ENCODE measurements at regions of chr20 and their contacts with region 1.

Region 1: DNA sequence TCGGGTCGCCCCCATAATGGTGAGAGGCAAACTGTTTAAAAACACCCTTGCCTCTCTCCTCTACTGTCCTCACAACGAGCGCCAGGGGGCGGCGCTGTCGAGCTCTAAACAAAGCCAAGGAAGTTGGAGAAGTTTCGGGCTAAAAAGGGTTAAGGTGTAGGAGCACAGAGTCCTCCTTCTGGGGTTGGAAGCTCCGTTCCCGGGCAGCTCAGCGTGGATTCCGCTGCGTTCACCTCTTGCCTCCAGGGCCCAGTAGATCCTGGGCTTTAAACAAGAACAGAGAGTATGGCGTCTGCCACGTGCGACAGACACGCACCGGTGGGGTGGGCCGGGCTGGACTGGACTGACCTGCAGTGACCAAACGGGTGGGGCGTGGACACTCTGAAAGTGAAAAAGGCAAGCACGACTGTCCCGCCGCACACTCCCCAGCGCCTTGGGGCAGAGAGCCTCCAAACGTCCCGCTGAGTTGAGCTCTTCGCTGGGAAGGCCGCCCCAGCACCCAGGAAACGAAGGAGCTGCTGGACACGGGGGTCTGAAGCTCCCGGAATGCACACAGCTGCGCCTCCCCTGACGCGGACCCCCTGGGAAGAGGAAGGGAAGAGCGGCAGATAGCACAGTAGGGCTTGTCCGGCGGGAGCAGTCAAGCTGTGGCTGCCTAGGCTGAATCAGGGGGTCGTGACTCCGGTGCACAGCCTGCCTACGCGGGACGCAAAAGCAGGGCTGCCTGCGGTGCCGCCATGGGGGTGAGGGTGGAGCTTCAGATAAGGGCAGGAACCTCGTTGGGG is 1.6 kb upstream of the THBD start:
- DNase-seq: peak; percentile 89
- H3K4me3 ChIP-seq: peak overlapping the region; percentile 77
- H3K27ac ChIP-seq: peak overlapping the region; percentile 41
- H3K4me1 ChIP-seq: peaks cover 8% of the 10 kb centered on the region; the same call in 1 of the 2 replicates
- H3K27me3 ChIP-seq: no peaks in the 10 kb centered on the region

Region 2: DNA sequence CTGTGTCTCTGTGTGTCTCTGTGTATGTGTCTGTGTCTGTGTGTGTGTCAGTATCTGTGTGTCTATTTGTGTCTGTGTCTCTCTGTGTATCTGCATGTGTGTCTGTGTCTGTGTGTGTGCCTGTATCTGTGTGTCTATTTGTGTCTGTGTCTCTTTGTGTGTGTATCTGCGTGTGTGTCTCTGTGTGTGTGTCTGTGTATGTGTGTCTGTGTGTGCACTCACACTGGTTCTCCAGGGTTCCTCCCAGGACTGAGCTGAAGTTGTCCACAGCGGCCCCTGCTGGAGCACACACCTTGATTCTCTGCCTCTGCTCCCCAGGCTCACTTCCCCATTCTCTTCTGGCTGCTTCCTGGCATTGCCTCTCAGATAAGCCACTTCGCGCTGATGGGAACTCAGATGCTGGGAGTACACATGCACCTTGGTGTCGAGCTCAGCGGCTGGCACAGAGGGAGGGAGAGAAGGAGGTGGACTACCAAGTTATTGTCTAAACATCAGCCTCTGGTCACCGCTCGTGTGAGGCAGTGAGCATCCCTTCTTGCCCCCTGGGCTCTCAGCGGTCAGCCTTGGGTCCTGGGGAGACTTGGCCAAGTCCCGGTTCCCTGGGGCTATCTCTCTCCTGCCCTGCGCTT is 194.6 kb after region 1 on chr20:
- in situ Hi-C with region 1: loop called (anchors 25 kb)
- DNase-seq: no peak
- H3K4me3 ChIP-seq: no peak overlapping the region
- H3K27ac ChIP-seq: no peak overlapping the region
- H3K4me1 ChIP-seq: peaks cover 9% of the 10 kb centered on the region; the same call in 1 of the 2 replicates
- H3K27me3 ChIP-seq: no peaks in the 10 kb centered on the region

Region 3: GRCh38 chr20:23331450-23332350 is 280.7 kb after region 1 on chr20:
- in situ Hi-C with region 1: loop called (anchors 10 kb)
- DNase-seq: no peak
- H3K4me3 ChIP-seq: no peak overlapping the region
- H3K27ac ChIP-seq: no peak overlapping the region
- H3K4me1 ChIP-seq: no peaks in the 10 kb centered on the region
- H3K27me3 ChIP-seq: no peaks in the 10 kb centered on the region

Measured in GM23248 (cell line).